ENCODE measurements at regions of chr5 and their contacts with region 1.

Region 1: GRCh38 chr5:989961-990530 is 18.6 kb upstream of the NKD2 start:
- DNase-seq: peak; percentile 88

Region 2: DNA sequence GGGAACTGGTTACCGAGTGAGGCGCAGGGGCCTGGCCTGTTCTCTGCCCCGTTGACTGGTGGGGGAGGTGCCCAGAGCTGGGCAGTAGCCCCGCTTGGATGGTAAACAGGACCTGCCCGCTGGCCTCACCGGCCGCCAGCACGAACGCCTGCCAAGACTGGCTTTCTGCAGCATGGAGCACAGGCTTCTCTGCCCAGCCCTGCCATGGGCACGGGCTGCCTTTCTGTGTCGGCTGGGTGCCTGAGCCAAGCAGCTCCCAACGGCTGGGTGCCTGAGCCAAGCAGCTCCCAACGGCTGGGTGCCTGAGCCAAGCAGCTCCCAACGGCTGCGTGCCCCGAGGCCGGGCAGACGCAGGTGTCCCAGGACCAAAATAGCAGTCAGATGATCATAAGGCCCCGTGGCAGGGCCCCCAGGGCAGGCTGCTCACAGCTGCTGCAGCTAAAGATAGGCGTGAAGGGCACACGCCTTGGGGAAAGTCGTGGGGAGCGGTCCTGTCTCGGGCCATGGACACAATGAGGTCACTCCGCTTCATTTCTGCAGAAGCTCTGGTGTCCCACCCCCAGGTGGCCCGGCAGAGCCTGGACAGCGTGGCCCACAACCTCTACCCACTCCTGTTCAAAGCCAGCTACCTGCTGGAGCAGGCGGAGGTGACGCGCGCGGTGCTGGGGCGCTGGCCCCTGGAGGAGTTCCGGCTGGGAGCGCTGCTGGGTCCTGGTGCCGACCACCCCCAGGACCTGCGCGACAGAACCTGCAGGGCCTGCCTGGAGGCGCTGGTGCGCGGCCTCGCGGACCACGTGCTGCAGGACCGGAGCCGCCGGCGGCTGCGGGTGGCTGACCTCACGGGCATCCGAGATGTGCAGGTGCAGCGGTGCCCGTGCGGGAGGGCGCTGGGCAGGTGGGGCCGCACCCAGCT is 798.8 kb before region 1 on chr5 and contains the start of gene LRRC14B:
- intact Hi-C with region 1: loop called in 1 of 2 experiments (anchors 5 kb)
- DNase-seq: peak; percentile 78
- total RNA-seq, gene LRRC14B: not detected

Measured in posterior vena cava (tissue), 2 donors.